Left cardiac atrium (tissue), 4 donors: ENCODE measurements at regions of chr4 and their contacts with region 1.

Region 1: GRCh38 chr4:42673082-42673425 is 16.1 kb upstream of the ATP8A1 start:
- DNase-seq: peak; percentile 55
- ATAC-seq: peak; percentile 92 to 100

Region 2: GRCh38 chr4:41882625-41883347 is 790.3 kb before region 1 on chr4:
- intact Hi-C with region 1: no loop called
- DNase-seq: no peak
- ATAC-seq: peak; percentile 86 to 87

Region 3: DNA sequence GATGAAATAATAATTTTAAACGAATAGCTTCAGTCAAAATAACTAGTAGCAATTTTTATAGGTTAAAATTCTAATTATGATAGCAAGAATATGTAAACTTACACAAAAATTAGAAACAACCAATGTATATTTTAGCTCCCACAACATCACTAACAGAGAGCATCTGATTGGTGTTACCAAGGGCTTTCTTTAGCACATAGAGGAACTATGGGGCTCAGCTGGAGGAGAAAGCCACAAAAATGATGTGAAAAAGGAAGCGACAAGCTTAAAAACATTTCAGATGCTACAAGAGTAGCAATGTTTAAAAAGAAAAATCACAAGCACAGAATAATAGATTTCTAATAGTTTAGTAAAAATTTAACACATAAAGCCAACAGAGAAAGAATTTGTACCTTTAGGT is 72.5 kb before region 1 on chr4:
- intact Hi-C with region 1: loop called in 1 of 2 experiments (anchors 5 kb)
- DNase-seq: no peak
- ATAC-seq: no peak

Region 4: DNA sequence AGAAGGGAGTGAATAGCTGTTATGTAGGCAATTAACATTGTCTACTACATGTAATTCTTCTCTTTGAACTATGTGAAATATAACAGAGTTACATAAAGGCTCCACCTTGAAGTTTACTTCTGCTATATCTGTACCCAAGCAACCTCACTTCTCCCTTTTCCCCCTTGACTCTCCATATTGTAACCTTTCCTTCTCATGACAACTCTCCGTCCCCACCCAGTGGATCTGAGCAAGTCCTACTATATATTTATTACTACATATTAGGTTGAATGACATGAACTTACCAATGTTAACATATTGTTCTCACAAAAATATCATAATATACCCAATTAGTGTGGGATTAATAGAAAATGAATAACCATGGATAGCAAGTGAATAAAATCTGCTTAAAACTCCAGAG is 77.0 kb after region 1 on chr4:
- intact Hi-C with region 1: loop called in 1 of 2 experiments (anchors 10 kb)
- DNase-seq: no peak
- ATAC-seq: peak; percentile 69 to 87

Region 5: DNA sequence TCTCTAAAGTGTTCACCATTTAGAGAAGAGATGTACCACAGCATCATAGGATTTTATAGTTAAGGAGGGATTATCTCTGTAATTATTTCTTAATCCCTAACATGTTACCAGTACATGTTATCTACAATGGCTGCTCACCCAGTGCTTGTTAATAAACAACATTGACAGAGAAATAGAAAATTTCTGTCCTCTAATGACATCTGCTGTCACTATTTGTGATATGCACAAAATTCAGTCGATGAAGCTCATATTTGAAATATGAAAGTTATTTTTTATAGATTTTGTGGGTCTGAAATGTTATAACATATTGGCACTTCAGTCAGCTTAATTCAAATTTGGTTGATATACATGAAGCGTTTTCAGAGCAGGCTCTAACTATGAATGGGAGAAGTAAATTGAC is 170.6 kb after region 1 on chr4:
- intact Hi-C with region 1: no loop called
- DNase-seq: no peak
- ATAC-seq: no peak